Activated CD4-positive, alpha-beta T cell treated with anti-CD3 and anti-CD28 coated beads for 36 hours (primary cell): ENCODE measurements at regions of chr2 and their contacts with region 1.

Region 1: DNA sequence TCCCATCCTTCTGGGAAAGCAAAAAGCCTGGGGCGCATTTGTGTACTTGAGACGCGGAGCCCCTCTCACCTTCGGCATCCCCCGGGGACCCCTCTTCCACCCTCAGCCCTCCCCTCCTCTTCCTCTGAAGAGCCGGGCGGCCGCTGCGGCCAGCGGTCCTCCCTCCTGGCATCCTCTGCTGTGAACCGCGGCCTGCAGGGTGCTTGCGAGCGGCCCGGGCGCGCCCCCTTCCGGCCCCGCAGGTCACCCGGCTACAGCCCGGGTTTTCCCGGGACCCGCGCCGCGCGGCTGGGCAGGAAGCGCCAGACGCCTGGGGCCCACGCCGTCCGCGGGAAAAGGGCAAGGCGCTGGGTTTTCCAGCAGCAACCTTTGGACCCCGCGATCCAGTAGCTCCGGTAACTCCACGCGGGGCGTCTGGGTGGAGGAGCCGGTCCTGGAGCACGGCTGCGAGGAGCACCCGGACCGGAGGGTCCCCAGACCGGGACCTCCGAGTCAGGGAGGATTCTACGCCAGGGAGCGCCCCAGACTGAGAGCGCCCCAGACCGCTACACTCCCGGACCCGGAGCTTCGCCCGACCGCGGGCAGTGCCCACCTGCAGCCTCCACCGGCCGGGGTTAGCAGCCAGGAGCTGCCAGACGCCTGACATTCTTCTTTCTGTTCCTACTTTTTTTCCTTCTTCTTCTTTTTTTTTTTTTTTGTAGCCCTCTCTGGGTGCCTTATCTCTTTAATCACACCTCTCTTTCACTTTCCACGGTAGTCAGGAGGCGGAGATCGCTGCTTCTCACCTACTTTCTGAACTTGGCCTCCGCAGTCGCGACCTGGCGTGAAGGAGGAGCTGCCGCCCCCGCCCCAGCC is at the start of gene IL18R1:
- DNase-seq: peak; percentile 85
- ATAC-seq: peak; percentile 86
- H3K4me3 Mint-ChIP-seq: peak within 1 kb of the TSS; percentile 100
- H3K27ac Mint-ChIP-seq: peak within 1 kb of the TSS; percentile 99
- H3K4me1 Mint-ChIP-seq: peaks cover 36% of the 10 kb centered on the region
- H3K27me3 Mint-ChIP-seq: no peaks in the 10 kb centered on the region
- total RNA-seq, gene IL18R1: 22.4 to 23.4 TPM

Region 2: DNA sequence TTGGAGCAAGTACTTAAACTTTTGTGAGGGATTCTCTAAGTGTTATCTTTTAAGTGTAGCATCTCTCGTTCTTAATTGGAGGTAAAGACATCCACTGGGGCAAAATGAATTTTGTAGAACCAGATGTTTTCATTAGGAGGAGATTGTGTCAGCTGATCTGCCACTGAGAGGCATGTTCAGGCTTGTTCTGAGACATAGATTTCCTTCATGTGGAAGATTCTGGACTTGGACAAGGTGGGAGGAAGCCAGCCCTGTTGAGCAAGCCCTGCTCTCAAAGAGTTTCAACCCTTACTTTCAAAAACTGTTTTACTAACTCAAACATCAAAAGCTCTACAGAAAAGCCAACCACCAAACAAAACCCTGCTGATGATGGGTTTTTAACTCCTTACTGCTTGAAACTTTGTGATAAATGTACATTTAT is 651.7 kb before region 1 on chr2:
- CTCF ChIA-PET with region 1: no interaction called
- POLR2A ChIA-PET with region 1: no interaction called
- intact Hi-C with region 1: loop called in 1 of 2 experiments (anchors 10 kb)
- DNase-seq: peak; percentile 54
- ATAC-seq: peak; percentile 18
- H3K4me3 Mint-ChIP-seq: peak overlapping the region; percentile 53
- H3K27ac Mint-ChIP-seq: peak overlapping the region; percentile 90
- H3K4me1 Mint-ChIP-seq: peaks cover 74% of the 10 kb centered on the region
- H3K27me3 Mint-ChIP-seq: no peaks in the 10 kb centered on the region

Region 3: DNA sequence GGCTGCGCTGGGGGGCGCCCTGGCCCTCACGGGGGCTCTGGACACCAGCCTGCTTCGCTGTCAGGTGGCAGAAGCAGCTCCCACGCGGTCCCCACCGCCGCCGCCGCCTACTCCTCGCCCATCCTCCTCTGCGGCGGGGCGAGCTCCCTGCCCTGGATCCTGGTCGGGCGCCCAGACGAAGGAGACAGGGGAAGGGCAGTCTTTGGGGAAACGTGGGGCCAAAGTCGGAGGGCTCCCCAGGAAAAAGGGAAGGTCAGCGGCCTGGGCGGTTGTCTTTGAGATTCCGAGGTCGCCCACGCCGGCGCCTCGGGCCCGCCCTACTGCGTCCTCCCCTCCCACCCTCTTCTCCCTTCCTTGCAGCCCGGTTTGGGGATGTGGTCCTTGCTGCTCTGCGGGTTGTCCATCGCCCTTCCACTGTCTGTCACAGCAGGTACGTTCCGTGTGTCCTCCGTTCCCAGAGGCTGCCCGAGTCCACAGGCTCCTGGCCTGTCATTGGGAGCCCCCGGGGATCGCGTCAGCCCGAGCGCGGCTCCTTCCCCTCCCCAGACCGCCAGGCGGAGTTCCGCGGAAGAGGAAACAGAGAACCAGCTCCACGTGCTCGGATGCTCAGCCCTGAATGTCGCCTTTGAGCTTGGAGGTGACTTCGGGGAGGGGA is 168.1 kb before region 1 on chr2:
- CTCF ChIA-PET with region 1: no interaction called
- POLR2A ChIA-PET with region 1: no interaction called
- intact Hi-C with region 1: loop called in 1 of 2 experiments (anchors 5 kb)
- DNase-seq: peak; percentile 70
- ATAC-seq: peak; percentile 76
- H3K4me3 Mint-ChIP-seq: peak overlapping the region; percentile 65
- H3K27ac Mint-ChIP-seq: peak overlapping the region; percentile 90
- H3K4me1 Mint-ChIP-seq: peaks cover 24% of the 10 kb centered on the region
- H3K27me3 Mint-ChIP-seq: peaks cover 8% of the 10 kb centered on the region

Region 4: DNA sequence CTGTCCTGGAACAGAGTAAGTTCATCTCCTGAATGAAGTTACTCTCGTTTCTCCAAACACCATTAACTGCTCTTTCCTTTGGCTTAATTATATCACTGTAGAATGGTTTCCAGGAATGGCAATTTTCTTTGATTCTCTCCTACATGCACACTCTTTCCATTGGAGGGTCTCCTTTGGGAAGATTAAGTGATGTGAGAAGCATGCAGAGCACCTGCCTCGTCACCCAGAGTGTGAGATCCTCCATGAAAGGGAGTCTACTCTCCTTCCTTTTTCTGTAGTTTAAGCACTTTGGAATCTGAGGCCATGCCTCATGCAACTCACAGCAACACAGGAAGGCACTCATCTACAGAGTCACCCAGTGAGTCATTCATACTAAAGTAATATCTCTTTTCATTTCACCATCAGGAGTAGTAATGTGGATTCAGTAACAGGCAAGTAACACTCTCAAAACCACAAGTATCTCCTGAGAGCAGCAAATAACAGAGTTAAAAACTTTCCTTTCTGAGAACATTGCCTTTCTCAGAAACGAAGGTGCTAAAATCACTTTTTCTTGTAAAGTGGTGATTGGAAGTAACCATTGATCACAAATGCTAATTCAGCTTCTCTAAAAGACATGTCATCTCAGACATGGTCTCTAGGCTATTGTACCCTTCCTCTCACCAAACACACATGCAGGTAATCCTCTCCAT is 97.2 kb before region 1 on chr2:
- CTCF ChIA-PET with region 1: interaction called, 3 read pairs
- POLR2A ChIA-PET with region 1: no interaction called
- intact Hi-C with region 1: loop called (anchors 2 kb)
- DNase-seq: peak; percentile 63
- ATAC-seq: peak; percentile 92
- H3K4me3 Mint-ChIP-seq: peak overlapping the region; percentile 26
- H3K27ac Mint-ChIP-seq: peak overlapping the region; percentile 97
- H3K4me1 Mint-ChIP-seq: peaks cover 45% of the 10 kb centered on the region
- H3K27me3 Mint-ChIP-seq: no peaks in the 10 kb centered on the region

Region 5: GRCh38 chr2:102342891-102343290 is 12.9 kb before region 1 on chr2:
- CTCF ChIA-PET with region 1: no interaction called
- POLR2A ChIA-PET with region 1: no interaction called
- intact Hi-C with region 1: no loop called
- DNase-seq: no peak
- ATAC-seq: no peak
- H3K4me3 Mint-ChIP-seq: no peak overlapping the region
- H3K27ac Mint-ChIP-seq: no peak overlapping the region
- H3K4me1 Mint-ChIP-seq: peaks cover 2% of the 10 kb centered on the region
- H3K27me3 Mint-ChIP-seq: no peaks in the 10 kb centered on the region

Region 6: DNA sequence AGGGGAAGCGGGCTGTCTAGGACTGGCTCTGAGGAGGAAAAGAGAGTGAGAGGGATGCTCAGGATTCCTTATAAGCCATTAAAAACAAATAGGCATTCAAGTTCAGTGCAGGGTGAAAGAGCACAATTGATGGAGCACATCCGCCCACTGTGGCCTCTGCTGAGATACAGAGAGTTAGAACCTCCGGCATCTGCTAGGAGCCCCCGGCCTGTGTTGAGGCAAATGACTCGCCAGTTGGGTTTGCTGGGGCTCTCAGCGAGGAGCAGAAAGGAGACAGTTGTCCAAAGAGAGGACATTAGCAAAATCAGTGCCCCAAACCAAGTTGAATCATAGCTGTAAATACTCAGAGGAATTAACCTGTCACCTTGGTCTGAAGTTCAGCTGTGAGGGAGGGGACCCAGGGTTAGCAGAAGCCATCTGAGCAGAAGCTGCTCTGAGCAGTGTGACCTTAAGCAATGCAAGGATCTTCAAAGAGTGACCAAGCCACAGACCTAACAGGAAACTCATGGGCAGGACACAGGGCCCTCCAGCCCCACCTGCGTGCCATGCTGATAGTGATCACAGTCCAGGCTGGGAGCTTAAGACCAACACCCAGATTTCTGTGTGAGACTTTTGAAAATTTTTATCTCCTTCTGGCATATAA is 43.9 kb after region 1 on chr2:
- CTCF ChIA-PET with region 1: no interaction called
- POLR2A ChIA-PET with region 1: no interaction called
- intact Hi-C with region 1: no loop called
- DNase-seq: no peak
- ATAC-seq: no peak
- H3K4me3 Mint-ChIP-seq: no peak overlapping the region
- H3K27ac Mint-ChIP-seq: no peak overlapping the region
- H3K4me1 Mint-ChIP-seq: peaks cover 12% of the 10 kb centered on the region
- H3K27me3 Mint-ChIP-seq: no peaks in the 10 kb centered on the region

Region 7: GRCh38 chr2:102418421-102418961 is 62.7 kb after region 1 on chr2:
- CTCF ChIA-PET with region 1: interaction called, 4 read pairs
- POLR2A ChIA-PET with region 1: no interaction called
- intact Hi-C with region 1: loop called in 1 of 2 experiments (anchors 1 kb)
- DNase-seq: no peak
- ATAC-seq: peak; percentile 61
- H3K4me3 Mint-ChIP-seq: peak overlapping the region; percentile 70
- H3K27ac Mint-ChIP-seq: peak overlapping the region; percentile 90
- H3K4me1 Mint-ChIP-seq: peaks cover 57% of the 10 kb centered on the region
- H3K27me3 Mint-ChIP-seq: peaks cover 7% of the 10 kb centered on the region

Region 8: DNA sequence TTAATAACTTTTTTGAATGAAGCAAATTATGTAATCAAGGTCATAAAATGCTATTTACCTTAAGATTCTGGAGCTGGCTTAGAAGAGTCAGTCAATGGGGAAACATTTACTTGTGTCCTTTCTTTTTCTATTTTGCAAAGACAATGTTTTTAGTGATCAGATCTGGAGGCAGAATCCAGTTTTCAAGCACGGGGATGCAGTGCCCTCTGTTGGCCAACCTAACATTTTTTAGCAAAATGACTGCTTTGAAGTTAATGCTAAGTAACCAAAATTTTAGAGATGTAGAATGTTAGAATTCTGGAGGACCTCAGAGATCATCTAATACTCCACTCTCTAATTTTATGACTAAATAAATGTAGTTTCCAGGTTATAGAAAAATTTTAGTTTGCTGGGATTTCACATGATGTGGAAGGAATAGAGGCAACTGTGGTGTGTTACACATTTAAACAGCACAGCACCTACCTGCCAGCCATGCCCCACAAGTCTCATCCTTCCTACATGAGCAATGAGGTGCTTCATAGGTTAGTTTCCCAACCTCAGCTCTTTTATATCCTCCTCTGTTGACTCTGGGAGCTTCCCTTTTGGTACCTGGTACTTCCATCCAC is 93.7 kb after region 1 on chr2:
- CTCF ChIA-PET with region 1: interaction called, 13 read pairs
- POLR2A ChIA-PET with region 1: no interaction called
- intact Hi-C with region 1: loop called in 1 of 2 experiments (anchors 1 kb)
- DNase-seq: peak; percentile 85
- ATAC-seq: peak; percentile 58
- H3K4me3 Mint-ChIP-seq: no peak overlapping the region
- H3K27ac Mint-ChIP-seq: no peak overlapping the region
- H3K4me1 Mint-ChIP-seq: peaks cover 6% of the 10 kb centered on the region
- H3K27me3 Mint-ChIP-seq: no peaks in the 10 kb centered on the region